Activated CD4-positive, alpha-beta T cell treated with anti-CD3 and anti-CD28 coated beads for 36 hours (primary cell): ENCODE measurements at regions of chr2 and their contacts with region 1.

Region 1: DNA sequence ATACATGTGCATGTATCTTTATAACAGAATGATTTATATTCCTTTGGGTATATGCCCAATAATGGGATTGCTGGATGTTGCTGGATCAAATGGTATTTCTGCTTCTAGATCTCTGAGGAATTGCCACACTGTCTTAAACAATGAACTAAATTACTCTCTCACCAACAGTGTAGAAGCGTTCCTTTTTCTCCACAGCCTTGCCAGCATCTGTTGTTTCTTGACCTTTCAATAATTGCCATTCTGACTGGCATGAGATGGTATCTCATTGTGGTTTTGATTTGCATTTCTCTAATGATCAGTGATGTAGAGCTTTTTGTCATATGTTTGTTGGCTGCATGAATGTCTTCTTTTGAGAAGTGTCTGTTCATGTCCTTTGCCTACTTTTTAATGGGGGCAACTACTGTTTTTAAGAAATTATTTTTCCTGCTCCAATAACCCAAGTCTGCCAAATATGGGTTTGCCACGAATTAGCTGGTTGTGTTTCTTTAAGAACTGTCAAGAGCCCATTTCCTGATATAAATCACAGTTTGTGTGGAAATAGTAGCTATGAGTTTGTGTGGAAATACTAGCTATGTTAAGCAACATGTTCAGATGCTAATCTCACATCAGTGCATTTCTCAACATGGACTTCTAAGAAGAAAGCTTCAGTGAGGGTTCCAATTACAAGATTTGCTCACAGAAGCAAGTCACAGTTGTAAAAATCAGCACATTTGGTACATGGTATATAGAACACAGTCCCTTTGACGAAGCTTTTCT is 259.4 kb downstream of the ANAPC1 start:
- DNase-seq: no peak
- ATAC-seq: no peak
- H3K4me3 Mint-ChIP-seq: no peak overlapping the region
- H3K27ac Mint-ChIP-seq: no peak overlapping the region
- H3K4me1 Mint-ChIP-seq: peaks cover 23% of the 10 kb centered on the region
- H3K27me3 Mint-ChIP-seq: peaks cover 5% of the 10 kb centered on the region

Region 2: GRCh38 chr2:111157798-111158197 is 466.8 kb before region 1 on chr2:
- CTCF ChIA-PET with region 1: no interaction called
- POLR2A ChIA-PET with region 1: no interaction called
- intact Hi-C with region 1: no loop called
- DNase-seq: no peak
- ATAC-seq: peak; percentile 23
- H3K4me3 Mint-ChIP-seq: no peak overlapping the region
- H3K27ac Mint-ChIP-seq: no peak overlapping the region
- H3K4me1 Mint-ChIP-seq: peaks cover 47% of the 10 kb centered on the region
- H3K27me3 Mint-ChIP-seq: no peaks in the 10 kb centered on the region

Region 3: DNA sequence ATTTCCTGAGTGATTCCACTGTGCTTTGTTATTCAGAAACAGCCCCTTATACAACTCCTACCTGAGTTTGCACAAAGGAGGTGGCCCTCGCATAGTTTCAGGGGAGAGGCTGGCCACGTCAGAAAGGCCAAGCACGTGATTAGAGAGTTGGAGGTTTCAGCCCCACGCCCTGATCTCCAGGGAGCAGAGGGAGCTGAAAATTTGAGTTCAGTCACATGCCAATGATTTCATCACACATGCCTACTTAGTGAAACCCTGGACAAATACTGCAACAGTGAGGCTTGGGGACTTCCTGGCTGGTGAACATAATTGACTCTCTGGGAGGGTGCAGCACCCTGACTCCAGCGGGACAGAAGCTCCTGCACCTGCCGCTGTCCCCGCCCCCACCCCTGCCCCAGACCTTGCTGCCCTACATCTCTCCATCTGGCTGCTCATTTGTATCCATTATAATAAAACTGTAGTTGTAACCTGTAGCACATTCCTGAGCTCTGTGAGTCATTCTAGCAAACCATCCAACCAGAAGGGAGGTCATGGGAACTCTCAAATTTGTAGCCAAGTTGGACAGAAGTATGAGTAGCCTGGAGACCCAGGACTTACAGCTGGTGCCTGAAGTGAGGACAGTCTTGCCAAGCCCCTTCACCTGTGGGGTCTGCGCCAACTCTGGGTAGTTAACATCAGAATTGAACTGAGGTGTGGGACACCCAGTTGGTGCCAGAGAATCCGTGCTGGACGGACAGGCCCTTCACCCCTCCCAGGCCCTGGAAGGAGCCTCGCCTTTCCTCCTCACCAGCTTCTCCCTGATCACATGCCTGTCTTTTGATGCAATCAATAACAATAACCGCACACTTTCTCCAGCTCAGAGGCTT is 35.1 kb after region 1 on chr2:
- CTCF ChIA-PET with region 1: interaction called, 3 read pairs
- POLR2A ChIA-PET with region 1: no interaction called
- intact Hi-C with region 1: loop called in 1 of 2 experiments (anchors 5 kb)
- DNase-seq: no peak
- ATAC-seq: no peak
- H3K4me3 Mint-ChIP-seq: no peak overlapping the region
- H3K27ac Mint-ChIP-seq: no peak overlapping the region
- H3K4me1 Mint-ChIP-seq: peaks cover 10% of the 10 kb centered on the region
- H3K27me3 Mint-ChIP-seq: peaks cover 16% of the 10 kb centered on the region